ENCODE measurements at regions of chr17 and their contacts with region 1.

Region 1: DNA sequence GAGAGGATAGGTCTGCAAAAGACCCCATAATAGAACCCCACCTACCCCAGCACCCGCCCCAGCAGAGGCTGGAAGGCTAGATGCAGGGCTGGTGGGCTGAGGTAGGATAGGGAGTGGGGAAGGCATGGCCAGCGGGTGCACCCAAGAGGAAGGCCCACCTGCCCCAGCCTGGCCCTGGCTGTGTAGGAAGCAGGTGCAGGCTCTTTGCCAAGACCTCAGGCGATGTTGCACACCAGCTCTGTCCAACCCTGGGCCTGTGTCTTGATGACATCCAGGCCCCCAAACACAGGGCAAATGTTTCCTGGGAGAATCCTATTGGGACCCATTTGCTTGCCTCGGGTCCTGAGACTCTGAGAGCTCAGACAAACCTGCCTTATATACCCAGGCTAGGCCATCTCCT is 12.2 kb downstream of the UNC119 start:
- H3K4me3 ChIP-seq: no peak overlapping the region
- H3K27ac ChIP-seq: no peak overlapping the region
- H3K4me1 ChIP-seq: no peaks in the 10 kb centered on the region
- CTCF ChIP-seq: no peak

Region 2: GRCh38 chr17:28484296-28484695 is 55.9 kb before region 1 on chr17:
- CTCF ChIA-PET with region 1: interaction called, 20 read pairs
- POLR2A ChIA-PET with region 1: no interaction called
- H3K4me3 ChIP-seq: no peak overlapping the region
- H3K27ac ChIP-seq: no peak overlapping the region
- H3K4me1 ChIP-seq: peaks cover 4% of the 10 kb centered on the region; the same call in 1 of the 2 replicates
- CTCF ChIP-seq: no peak

Region 3: GRCh38 chr17:28494445-28495188 is 45.6 kb before region 1 on chr17:
- CTCF ChIA-PET with region 1: interaction called, 155 read pairs
- POLR2A ChIA-PET with region 1: no interaction called
- H3K4me3 ChIP-seq: no peak overlapping the region
- H3K27ac ChIP-seq: no peak overlapping the region
- H3K4me1 ChIP-seq: no peaks in the 10 kb centered on the region
- CTCF ChIP-seq: peak; percentile 86

Region 4: DNA sequence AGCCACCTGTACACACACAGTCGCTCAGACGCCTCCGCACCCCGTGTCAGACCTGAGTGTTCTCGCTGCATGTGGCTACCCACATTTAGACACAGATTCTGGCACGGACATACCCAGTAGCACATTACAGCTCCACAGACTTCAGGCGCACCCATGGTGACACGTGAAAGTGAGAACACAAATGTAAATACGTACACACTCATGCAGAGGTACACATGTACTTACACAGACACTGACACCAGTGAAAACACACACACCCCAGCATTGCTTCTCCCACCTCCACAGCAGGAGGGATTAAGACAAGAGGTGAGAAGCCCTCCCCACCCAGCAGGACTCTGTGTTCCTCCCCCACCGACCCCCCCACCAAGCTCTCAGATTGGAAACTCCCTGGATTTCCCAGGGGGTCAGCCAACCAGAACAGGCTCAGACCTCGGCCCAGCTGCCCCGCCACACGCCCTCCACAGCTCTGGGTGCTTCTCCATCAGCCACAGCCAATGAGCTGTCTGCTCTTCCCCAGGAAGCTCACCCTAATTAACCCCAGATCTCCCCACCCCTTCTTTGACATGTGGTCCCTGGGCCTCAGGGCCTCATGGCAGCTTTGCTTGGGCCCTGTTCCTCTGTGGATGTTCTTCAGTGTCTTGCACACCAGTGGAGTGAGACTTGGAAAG is 39.4 kb before region 1 on chr17:
- CTCF ChIA-PET with region 1: interaction called, 155 read pairs
- POLR2A ChIA-PET with region 1: no interaction called
- H3K4me3 ChIP-seq: no peak overlapping the region
- H3K27ac ChIP-seq: no peak overlapping the region
- H3K4me1 ChIP-seq: no peaks in the 10 kb centered on the region
- CTCF ChIP-seq: no peak

Region 5: DNA sequence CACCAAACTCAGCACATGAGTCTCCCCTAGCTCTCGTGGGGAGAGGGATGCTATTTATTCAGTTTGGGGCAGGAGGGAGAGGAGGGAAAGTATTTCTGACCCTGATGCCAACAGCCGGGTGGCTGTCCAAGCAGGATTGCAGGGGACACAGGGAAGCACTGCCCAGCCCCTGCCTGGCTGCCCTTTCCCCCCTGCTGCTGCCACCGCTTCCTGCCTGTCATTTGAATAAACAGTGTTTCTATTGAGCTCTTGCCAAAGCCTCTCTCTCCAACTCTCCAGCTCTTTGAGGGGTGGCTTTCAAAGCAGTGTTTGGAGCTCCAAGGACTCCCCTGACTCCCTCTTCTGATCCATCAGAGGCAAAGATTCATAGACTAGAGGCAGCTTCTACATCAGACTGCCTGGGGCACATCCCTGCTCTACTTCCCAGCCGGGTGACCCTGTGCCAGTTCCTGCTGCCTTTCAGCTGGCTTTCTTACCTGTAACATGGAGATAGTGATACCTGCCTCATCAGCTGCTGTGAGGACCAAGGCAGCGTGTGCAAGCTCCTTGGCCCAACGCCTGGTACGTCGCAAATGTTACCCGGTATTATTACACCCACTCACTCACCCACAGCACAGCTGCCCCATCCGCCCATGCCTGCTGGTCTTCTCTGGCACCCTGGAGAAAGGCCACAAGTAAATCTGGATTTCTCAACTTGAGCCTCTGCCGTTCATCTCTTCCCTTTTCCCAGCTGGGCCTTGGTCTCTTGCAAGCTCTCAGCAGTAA is 161.9 kb after region 1 on chr17:
- CTCF ChIA-PET with region 1: no interaction called
- POLR2A ChIA-PET with region 1: no interaction called
- H3K4me3 ChIP-seq: no peak overlapping the region
- H3K27ac ChIP-seq: no peak overlapping the region
- H3K4me1 ChIP-seq: no peaks in the 10 kb centered on the region
- CTCF ChIP-seq: no peak

Measured in HEK293 (cell line).